HCT116 (cell line): ENCODE measurements at regions of chr5 and their contacts with region 1.

Region 1: GRCh38 chr5:39376293-39376714 is 12.0 kb upstream of the C9 start:
- DNase-seq: peak; percentile 22
- ATAC-seq: peak; percentile 86
- H3K4me3 ChIP-seq: no peak overlapping the region
- H3K27ac ChIP-seq: no peak overlapping the region
- H3K4me1 ChIP-seq: no peaks in the 10 kb centered on the region
- H3K27me3 ChIP-seq: no peaks in the 10 kb centered on the region
- CTCF ChIP-seq: peak; percentile 69 to 86 (median 71); a peak in 5 of 6 replicates
- POLR2A ChIP-seq: no peak
- RAD21 ChIP-seq: peak; percentile 81

Region 2: DNA sequence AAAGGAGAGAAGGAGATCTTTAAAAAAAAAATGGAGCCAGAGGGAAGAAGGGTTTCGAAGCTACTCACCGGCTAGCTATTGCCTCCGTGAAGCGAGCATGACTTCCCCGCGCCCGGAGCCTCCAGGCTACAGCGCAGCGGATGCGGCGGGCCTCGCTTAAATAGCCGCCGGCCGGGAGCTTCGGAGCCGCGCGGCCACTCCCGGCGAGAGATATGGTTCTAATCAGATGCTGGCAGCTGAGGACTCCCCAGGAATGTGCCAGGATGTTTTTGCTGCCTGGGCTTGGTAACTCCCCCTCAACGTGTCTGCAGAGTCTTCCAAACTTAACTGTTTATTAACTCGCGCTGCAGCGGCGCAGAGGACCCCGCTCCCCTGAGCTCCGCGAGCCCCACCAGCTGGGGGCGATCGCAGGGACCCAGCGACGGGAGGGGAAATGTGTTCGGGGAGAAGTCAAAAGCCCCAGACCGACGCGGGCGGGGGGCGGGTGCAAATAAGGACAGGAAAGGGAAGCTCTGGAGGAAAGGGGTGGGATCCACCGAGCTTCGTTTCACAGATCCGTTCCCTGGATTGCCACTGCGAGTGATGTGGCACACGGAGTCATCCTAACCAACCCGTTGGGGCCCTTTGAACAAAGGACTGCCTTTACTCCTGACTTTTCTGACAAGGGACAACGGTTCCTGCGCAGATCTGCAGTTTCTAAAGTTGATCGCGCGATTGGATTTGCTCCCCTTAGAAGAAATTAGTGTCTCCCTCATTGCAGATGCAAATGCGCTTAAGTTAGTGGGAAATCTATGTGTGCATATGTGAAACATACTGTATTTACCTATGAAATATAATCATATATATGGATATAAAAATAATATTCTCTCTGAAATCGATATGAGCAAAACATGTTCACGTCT is 48.7 kb after region 1 on chr5 and contains the start of gene DAB2:
- CTCF ChIA-PET with region 1: interaction called, 12 read pairs
- POLR2A ChIA-PET with region 1: no interaction called
- RAD21 ChIA-PET with region 1: interaction called in 1 of 2 experiments, 6 read pairs
- intact Hi-C with region 1: no loop called
- DNase-seq: peak; percentile 69
- ATAC-seq: peak; percentile 93
- H3K4me3 ChIP-seq: peak within 1 kb of the TSS; percentile 59 to 80
- H3K27ac ChIP-seq: peak within 1 kb of the TSS; percentile 31
- H3K4me1 ChIP-seq: peaks cover 11 to 12% of the 10 kb centered on the region in 2 experiments
- H3K27me3 ChIP-seq: no peaks in the 10 kb centered on the region
- CTCF ChIP-seq: peak in 2 of 3 experiments; percentile 58 to 65; a peak in 4 of 6 replicates
- POLR2A ChIP-seq: peak; percentile 42
- RAD21 ChIP-seq: no peak
- total RNA-seq, gene DAB2: 5.5 TPM

Region 3: GRCh38 chr5:39547553-39548154 is 171.3 kb after region 1 on chr5:
- CTCF ChIA-PET with region 1: interaction called, 132 read pairs
- POLR2A ChIA-PET with region 1: interaction called, 9 read pairs
- RAD21 ChIA-PET with region 1: interaction called, 18 to 20 read pairs
- intact Hi-C with region 1: loop called (anchors 1 kb)
- DNase-seq: peak; percentile 43
- ATAC-seq: peak; percentile 73
- H3K4me3 ChIP-seq: no peak overlapping the region
- H3K27ac ChIP-seq: no peak overlapping the region
- H3K4me1 ChIP-seq: 0 out of 4 replicates have a peak, but pooled peaks cover 0 to 4% of the 10 kb centered on the region in 2 experiments
- H3K27me3 ChIP-seq: no peaks in the 10 kb centered on the region
- CTCF ChIP-seq: peak; percentile 72 to 75 (median 75); a peak in 5 of 6 replicates
- POLR2A ChIP-seq: no peak
- RAD21 ChIP-seq: peak; percentile 79

Region 4: GRCh38 chr5:39558541-39558940 is 182.2 kb after region 1 on chr5:
- CTCF ChIA-PET with region 1: no interaction called
- POLR2A ChIA-PET with region 1: no interaction called
- RAD21 ChIA-PET with region 1: no interaction called
- intact Hi-C with region 1: no loop called
- DNase-seq: no peak
- ATAC-seq: no peak
- H3K4me3 ChIP-seq: no peak overlapping the region
- H3K27ac ChIP-seq: no peak overlapping the region
- H3K4me1 ChIP-seq: no peaks in the 10 kb centered on the region
- H3K27me3 ChIP-seq: no peaks in the 10 kb centered on the region
- CTCF ChIP-seq: no peak
- POLR2A ChIP-seq: no peak
- RAD21 ChIP-seq: no peak

Region 5: DNA sequence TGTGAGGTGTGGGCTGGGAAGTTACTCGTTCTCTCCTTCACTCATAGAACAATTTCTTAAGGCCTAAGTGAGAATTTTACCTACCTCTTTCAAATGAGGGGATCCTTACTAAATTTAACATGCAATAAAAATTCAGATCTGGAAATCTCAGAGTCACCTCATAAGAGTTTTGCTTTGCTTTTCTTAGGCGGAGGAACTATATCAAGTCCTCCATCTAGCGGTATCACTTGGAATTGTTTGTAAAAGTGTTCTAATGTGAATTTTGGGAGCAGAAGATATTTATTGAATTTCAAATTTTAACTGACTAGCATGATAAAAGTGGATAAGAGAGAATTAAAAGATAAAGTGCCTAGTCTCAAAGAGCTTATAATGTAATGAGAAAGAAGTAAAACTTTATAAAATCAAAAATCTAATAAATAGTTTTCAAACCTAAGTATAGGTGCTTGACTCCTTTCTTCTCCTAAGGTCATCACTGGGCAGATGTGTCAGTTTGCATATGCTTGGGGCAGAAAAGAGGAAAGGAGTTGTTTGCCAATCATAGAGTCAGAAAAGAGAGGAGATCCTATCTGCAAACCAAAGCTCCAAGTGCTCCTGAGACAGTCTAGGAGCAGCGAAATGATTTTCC is 194.2 kb after region 1 on chr5:
- CTCF ChIA-PET with region 1: interaction called, 45 read pairs
- POLR2A ChIA-PET with region 1: no interaction called
- RAD21 ChIA-PET with region 1: interaction called in 1 of 2 experiments, 3 read pairs
- intact Hi-C with region 1: loop called (anchors 1 kb)
- DNase-seq: peak; percentile 31
- ATAC-seq: peak; percentile 67
- H3K4me3 ChIP-seq: no peak overlapping the region
- H3K27ac ChIP-seq: no peak overlapping the region
- H3K4me1 ChIP-seq: no peaks in the 10 kb centered on the region
- H3K27me3 ChIP-seq: no peaks in the 10 kb centered on the region; the same call in 1 of the 2 replicates
- CTCF ChIP-seq: peak; percentile 52 to 77 (median 57); a peak in 5 of 6 replicates
- POLR2A ChIP-seq: no peak
- RAD21 ChIP-seq: peak; percentile 67